ENCODE measurements at regions of chr10 and their contacts with region 1.

Region 1: GRCh38 chr10:125549653-125550052 is 133.3 kb downstream of the TEX36 start:
- DNase-seq: no peak
- H3K4me3 ChIP-seq: no peak overlapping the region
- H3K27ac ChIP-seq: peak overlapping the region; percentile 73
- H3K4me1 ChIP-seq: peaks cover 22% of the 10 kb centered on the region
- H3K27me3 ChIP-seq: no peaks in the 10 kb centered on the region
- CTCF ChIP-seq: no peak
- POLR2A ChIP-seq: no peak

Region 2: GRCh38 chr10:125448607-125449006 is 101.0 kb before region 1 on chr10:
- CTCF ChIA-PET with region 1: no interaction called
- POLR2A ChIA-PET with region 1: no interaction called
- dilution Hi-C with region 1: no loop called
- intact Hi-C with region 1: no loop called
- DNase-seq: peak; percentile 23
- H3K4me3 ChIP-seq: no peak overlapping the region
- H3K27ac ChIP-seq: no peak overlapping the region
- H3K4me1 ChIP-seq: no peaks in the 10 kb centered on the region
- H3K27me3 ChIP-seq: no peaks in the 10 kb centered on the region
- CTCF ChIP-seq: peak; percentile 53 to 64
- POLR2A ChIP-seq: no peak

Region 3: GRCh38 chr10:125462845-125463244 is 86.8 kb before region 1 on chr10:
- CTCF ChIA-PET with region 1: no interaction called
- POLR2A ChIA-PET with region 1: no interaction called
- dilution Hi-C with region 1: no loop called
- intact Hi-C with region 1: no loop called
- DNase-seq: no peak
- H3K4me3 ChIP-seq: no peak overlapping the region
- H3K27ac ChIP-seq: no peak overlapping the region
- H3K4me1 ChIP-seq: no peaks in the 10 kb centered on the region
- H3K27me3 ChIP-seq: no peaks in the 10 kb centered on the region
- CTCF ChIP-seq: no peak
- POLR2A ChIP-seq: no peak

Region 4: GRCh38 chr10:125521721-125522680 is 27.7 kb before region 1 on chr10:
- CTCF ChIA-PET with region 1: interaction called, 3 read pairs
- POLR2A ChIA-PET with region 1: no interaction called
- dilution Hi-C with region 1: no loop called
- intact Hi-C with region 1: loop called (anchors 1 kb)
- DNase-seq: no peak
- H3K4me3 ChIP-seq: no peak overlapping the region
- H3K27ac ChIP-seq: no peak overlapping the region
- H3K4me1 ChIP-seq: no peaks in the 10 kb centered on the region
- H3K27me3 ChIP-seq: peaks cover 0 to 2% of the 10 kb centered on the region in 2 experiments
- CTCF ChIP-seq: peak; percentile 66 to 71
- POLR2A ChIP-seq: no peak

Region 5: DNA sequence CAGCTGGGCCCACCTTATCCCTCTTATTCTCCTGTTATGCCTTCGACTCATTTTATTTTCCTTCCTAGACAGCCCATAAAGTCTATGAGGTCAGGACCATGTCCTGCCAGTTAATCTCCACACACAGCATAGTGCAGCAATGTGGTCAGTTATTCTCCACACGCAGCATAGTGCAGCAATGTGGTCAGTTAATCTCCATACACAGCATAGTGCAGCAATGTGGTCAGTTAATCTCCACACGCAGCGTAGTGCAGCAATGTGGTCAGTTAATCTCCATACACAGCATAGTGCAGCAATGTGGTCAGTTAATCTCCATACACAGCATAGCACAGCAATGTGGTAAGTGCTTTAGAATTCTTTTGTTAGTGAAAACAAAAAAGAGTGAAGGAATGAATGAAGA is 55.5 kb after region 1 on chr10:
- CTCF ChIA-PET with region 1: interaction called, 10 read pairs
- POLR2A ChIA-PET with region 1: interaction called, 5 read pairs
- dilution Hi-C with region 1: no loop called
- intact Hi-C with region 1: loop called (anchors 1 kb)
- DNase-seq: peak; percentile 21
- H3K4me3 ChIP-seq: no peak overlapping the region
- H3K27ac ChIP-seq: no peak overlapping the region
- H3K4me1 ChIP-seq: peaks cover 28% of the 10 kb centered on the region
- H3K27me3 ChIP-seq: peaks cover 0 to 2% of the 10 kb centered on the region in 2 experiments
- CTCF ChIP-seq: no peak
- POLR2A ChIP-seq: no peak

Region 6: GRCh38 chr10:125679436-125679835 is 129.8 kb after region 1 on chr10:
- CTCF ChIA-PET with region 1: no interaction called
- POLR2A ChIA-PET with region 1: no interaction called
- dilution Hi-C with region 1: no loop called
- intact Hi-C with region 1: loop called (anchors 1 kb)
- DNase-seq: peak; percentile 35
- H3K4me3 ChIP-seq: no peak overlapping the region
- H3K27ac ChIP-seq: peak overlapping the region; percentile 53
- H3K4me1 ChIP-seq: peaks cover 15% of the 10 kb centered on the region
- H3K27me3 ChIP-seq: no peaks in the 10 kb centered on the region
- CTCF ChIP-seq: no peak
- POLR2A ChIP-seq: no peak

Region 7: DNA sequence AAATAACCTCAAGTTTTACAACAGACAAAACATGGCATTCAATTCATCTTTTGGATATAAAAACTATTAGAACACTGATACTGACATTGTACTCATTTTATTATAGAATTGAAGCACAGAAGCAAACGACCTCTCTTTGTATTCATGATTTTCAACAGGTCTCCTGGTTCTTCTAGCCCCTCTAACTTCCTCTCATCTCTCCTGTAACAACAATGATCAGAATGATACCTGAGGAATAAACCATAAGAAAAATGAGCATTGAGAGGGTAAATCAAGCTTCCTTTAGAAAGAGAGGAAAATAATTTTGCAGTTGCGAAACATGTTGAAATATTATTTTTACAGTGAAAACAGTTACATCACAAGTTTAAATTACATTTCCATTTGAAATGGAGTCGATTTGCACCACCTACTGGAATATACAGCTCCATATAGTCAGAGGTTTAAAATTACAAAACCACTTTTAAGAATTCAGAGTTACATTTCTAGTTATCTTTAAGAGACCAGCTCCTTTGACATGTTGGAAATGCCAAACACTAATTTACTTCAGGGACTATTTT is 150.8 kb after region 1 on chr10:
- CTCF ChIA-PET with region 1: no interaction called
- POLR2A ChIA-PET with region 1: no interaction called
- dilution Hi-C with region 1: no loop called
- intact Hi-C with region 1: no loop called
- DNase-seq: peak; percentile 27
- H3K4me3 ChIP-seq: no peak overlapping the region
- H3K27ac ChIP-seq: no peak overlapping the region
- H3K4me1 ChIP-seq: no peaks in the 10 kb centered on the region
- H3K27me3 ChIP-seq: peaks cover 0 to 8% of the 10 kb centered on the region in 2 experiments
- CTCF ChIP-seq: no peak
- POLR2A ChIP-seq: no peak

Region 8: GRCh38 chr10:126749015-126749655 is 1199.5 kb after region 1 on chr10:
- CTCF ChIA-PET with region 1: no interaction called
- POLR2A ChIA-PET with region 1: no interaction called
- dilution Hi-C with region 1: no loop called
- intact Hi-C with region 1: no loop called
- DNase-seq: peak; percentile 69
- H3K4me3 ChIP-seq: no peak overlapping the region
- H3K27ac ChIP-seq: no peak overlapping the region
- H3K4me1 ChIP-seq: no peaks in the 10 kb centered on the region
- H3K27me3 ChIP-seq: no peaks in the 10 kb centered on the region
- CTCF ChIP-seq: peak; percentile 67 to 69
- POLR2A ChIP-seq: no peak

Measured in endothelial cell of umbilical vein (primary cell).